ENCODE measurements at regions of chr15 and their contacts with region 1.

Region 1: GRCh38 chr15:73991726-73992593 is at the start of gene STOML1:
- DNase-seq: peak; percentile 95
- ATAC-seq: peak; percentile 68
- H3K4me3 ChIP-seq: peak within 1 kb of the TSS; percentile 85
- H3K27ac ChIP-seq: no peak within 1 kb of the TSS
- H3K4me1 ChIP-seq: peaks cover 59% of the 10 kb centered on the region
- H3K27me3 ChIP-seq: no peaks in the 10 kb centered on the region
- CTCF ChIP-seq: peak; percentile 79
- total RNA-seq, gene STOML1: 10.1 and 12.0 TPM in 2 replicates

Region 2: GRCh38 chr15:74044267-74045110 is 52.5 kb after region 1 on chr15:
- CTCF ChIA-PET with region 1: no interaction called
- POLR2A ChIA-PET with region 1: no interaction called
- intact Hi-C with region 1: loop called (anchors 5 kb)
- DNase-seq: no peak
- ATAC-seq: no peak
- H3K4me3 ChIP-seq: no peak overlapping the region
- H3K27ac ChIP-seq: no peak overlapping the region
- H3K4me1 ChIP-seq: peaks cover 8% of the 10 kb centered on the region; the same call in 1 of the 2 replicates
- H3K27me3 ChIP-seq: no peaks in the 10 kb centered on the region
- CTCF ChIP-seq: no peak

Region 3: GRCh38 chr15:74263466-74263865 is 271.5 kb after region 1 on chr15:
- CTCF ChIA-PET with region 1: no interaction called
- POLR2A ChIA-PET with region 1: no interaction called
- intact Hi-C with region 1: no loop called
- DNase-seq: no peak
- ATAC-seq: no peak
- H3K4me3 ChIP-seq: no peak overlapping the region
- H3K27ac ChIP-seq: no peak overlapping the region
- H3K4me1 ChIP-seq: no peaks in the 10 kb centered on the region
- H3K27me3 ChIP-seq: peaks cover 24% of the 10 kb centered on the region
- CTCF ChIP-seq: no peak

Measured in PC-3 (cell line).